AG04450 (cell line): ENCODE measurements at regions of chr5 and their contacts with region 1.

Region 1: GRCh38 chr5:146528236-146528635 is 12.2 kb upstream of the GPR151 start:
- DNase-seq: no peak
- H3K4me3 ChIP-seq: no peak overlapping the region
- H3K27ac ChIP-seq: no peak overlapping the region
- H3K27me3 ChIP-seq: no peaks in the 10 kb centered on the region
- CTCF ChIP-seq: peak; percentile 16; the same call in 1 of the 2 replicates

Region 2: DNA sequence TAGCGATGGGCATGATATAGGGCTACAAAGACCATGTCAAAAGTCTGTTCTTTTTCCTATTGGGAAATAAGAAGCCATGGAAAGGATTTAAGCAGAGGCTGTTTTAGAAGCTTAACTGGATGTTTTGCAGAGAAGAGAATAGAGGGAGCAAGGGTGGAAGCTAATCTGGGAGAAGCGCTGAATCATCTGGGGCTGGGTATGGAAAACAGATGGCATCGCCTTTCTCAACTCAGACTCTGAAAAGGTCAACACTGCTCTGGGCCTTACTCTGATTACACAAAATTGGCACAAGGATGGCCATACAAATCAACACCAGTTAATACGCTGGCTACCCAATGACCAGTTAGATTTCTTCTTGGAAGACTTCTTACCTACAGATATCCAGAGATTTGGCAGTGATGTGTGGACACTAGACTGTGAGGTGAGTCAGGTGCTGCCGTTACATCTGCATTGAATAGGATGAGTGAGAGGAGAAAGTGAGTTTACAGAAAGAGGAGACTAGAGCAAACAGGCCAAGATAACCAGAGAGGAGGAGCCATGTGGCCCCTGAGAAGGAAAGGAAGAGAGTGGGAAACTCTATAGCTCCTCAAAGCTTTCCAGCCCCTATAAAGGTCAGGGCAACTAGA is 87.3 kb before region 1 on chr5:
- CTCF ChIA-PET with region 1: no interaction called
- POLR2A ChIA-PET with region 1: no interaction called
- DNase-seq: no peak
- H3K4me3 ChIP-seq: no peak overlapping the region
- H3K27ac ChIP-seq: no peak overlapping the region
- H3K27me3 ChIP-seq: no peaks in the 10 kb centered on the region
- CTCF ChIP-seq: no peak

Region 3: DNA sequence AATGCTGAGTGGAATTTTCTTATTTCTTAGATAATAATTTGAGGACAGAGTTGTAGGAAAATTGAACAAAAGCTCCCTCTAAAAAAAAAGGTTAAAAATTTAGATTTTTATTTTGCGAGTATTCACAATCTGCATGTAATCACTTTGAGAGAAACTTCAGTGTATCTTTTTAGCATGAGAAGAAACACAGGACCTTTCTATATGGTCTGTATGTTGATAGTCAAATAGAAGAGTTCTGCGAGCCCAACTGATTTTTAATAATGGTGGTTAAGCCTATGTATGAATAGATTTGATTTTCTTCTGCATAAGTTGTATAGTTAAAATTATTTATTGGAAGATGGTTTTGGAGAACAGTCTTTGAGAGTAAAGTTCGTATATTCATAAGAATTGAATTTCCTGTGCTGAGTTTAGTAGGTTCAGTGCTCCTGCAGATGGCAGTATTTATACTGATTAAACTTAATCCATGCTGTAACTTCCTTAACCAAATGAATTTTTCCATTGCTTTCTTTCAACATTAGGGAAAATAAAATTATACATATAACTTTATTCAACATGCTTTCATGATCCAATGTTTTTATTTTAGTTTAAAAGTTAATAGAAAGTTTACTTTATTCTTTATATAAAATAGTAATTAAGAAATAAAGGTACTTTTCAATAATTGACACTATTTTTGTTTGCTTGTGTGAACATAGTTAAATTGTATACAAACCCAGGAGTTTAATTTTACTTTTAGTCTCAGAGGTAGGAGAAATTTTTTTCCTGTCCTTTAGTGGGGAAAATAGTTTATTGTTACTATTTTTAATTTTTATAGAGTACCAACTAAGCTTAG is 61.5 kb before region 1 on chr5:
- CTCF ChIA-PET with region 1: interaction called, 14 read pairs
- POLR2A ChIA-PET with region 1: no interaction called
- DNase-seq: no peak
- H3K4me3 ChIP-seq: no peak overlapping the region
- H3K27ac ChIP-seq: no peak overlapping the region
- H3K27me3 ChIP-seq: no peaks in the 10 kb centered on the region
- CTCF ChIP-seq: peak; percentile 57

Region 4: DNA sequence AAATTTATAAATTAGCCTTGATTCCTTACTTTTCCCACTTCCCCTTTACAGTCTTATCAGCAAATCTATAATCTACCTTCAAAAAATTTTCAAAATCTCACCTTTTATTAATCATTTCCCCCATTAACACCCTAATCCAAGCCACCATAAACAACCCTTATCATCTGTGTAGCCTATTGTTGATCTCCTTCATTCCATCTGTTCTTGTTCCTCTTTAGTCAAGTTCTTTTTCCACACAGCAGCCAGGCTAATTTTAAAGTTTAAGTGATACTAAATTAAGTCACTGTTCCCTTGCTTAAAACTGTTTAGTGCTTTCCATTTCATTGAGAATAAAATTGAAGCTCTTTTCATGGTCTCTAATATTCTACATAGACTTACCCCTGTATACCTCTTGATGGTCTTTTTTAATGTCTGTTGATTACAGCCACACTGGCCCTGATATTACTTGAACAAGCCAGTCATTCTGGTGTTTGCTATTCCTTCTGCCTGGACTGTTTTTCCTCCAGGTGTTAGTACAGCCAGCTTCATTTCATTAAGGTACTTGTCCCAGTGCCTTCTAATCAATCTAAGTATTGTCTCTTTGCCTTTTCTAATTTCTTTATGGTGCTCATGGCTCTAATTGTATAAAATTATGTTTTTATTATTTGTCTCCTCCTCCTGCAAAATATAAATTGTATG is 43.4 kb before region 1 on chr5:
- CTCF ChIA-PET with region 1: no interaction called
- POLR2A ChIA-PET with region 1: no interaction called
- DNase-seq: no peak
- H3K4me3 ChIP-seq: no peak overlapping the region
- H3K27ac ChIP-seq: no peak overlapping the region
- H3K27me3 ChIP-seq: no peaks in the 10 kb centered on the region
- CTCF ChIP-seq: no peak